Activated CD8-positive, alpha-beta T cell treated with anti-CD3 and anti-CD28 coated beads for 36 hours (primary cell): ENCODE measurements at regions of chr5 and their contacts with region 1.

Region 1: DNA sequence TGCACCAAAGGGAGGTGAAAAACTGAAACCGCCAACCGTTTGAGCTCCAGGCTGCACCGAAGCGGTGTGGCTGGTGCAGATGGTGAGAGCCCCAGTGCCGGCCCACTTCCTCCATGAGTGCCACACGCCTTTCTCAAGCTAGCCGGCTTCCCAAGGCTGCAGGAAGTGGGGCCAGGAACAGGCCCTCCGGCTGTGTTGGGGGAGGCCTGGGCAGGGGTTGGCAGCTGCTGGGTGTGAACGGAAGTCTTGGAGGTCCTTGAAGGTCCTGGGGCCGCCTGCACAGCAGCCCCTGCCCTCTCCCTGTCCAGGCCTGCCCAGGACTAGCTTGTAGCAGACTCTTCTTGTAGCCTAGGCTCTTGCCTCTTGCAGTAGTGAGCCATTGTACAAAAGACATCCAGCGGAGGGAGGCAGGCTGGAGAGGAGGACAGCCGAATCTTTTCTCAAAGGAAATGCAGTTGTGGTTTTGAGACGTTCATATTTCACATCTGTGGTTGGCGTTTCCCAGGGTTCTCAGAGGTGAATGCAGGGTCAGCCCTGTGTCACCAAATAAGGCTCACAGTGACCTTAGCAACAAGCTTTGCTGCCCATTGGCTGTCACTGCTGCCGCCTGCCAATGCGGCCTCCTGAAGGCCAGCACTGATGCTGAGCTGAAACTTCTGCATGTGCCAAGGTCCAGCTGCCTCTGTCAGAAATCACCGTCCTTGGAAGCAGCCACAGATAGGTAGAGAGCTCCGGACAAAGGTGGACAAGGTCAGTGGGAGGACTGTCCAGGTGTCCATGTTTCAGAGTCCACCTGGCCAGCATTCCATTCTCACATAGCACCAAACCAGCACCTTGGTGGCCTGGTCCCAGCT is 23.9 kb downstream of the IRF1 start:
- DNase-seq: peak; percentile 89
- ATAC-seq: peak; percentile 69
- H3K4me3 Mint-ChIP-seq: peak overlapping the region; percentile 66
- H3K27ac Mint-ChIP-seq: peak overlapping the region; percentile 88
- H3K4me1 Mint-ChIP-seq: peaks cover 87% of the 10 kb centered on the region
- H3K27me3 Mint-ChIP-seq: no peaks in the 10 kb centered on the region
- CTCF ChIP-seq: no peak

Region 2: DNA sequence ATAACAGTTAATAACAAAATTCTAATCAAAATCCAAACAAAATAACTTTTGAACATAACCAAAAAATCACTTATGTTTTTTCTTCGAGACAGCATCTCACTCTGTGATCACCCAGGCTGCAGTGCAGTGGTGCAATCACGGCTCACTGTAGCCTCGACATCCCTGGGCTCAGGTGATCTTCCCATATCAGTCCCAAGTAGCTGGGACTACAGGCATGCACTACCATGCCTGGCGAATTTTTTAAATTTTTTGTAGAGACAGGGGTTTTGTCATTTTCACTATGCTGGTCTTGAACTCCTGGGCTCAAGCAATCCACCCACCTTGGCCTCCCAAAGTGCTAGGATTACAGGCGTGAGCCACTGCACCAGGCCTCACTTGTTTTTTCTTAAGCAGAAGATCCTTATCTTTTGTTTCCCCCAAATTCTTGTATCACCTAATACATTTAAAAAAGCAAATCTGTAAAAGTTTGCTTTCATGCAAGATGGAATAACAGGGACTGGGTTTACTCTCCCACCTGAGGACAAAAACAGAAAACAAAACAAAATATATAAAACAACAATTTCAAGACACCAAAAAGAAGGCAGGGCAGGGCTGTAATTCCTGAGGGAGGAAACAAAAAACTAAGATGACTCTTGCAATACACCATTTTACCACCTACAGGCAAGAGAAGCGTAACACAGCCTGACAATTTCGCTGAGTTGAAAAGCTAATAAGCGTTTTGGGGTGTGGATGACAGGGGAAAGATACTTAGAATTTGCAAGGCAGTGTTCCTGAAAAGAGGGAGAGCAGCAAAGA is 903.0 kb before region 1 on chr5:
- CTCF ChIA-PET with region 1: no interaction called
- POLR2A ChIA-PET with region 1: no interaction called
- intact Hi-C with region 1: no loop called
- DNase-seq: no peak
- ATAC-seq: no peak
- H3K4me3 Mint-ChIP-seq: no peak overlapping the region
- H3K27ac Mint-ChIP-seq: no peak overlapping the region
- H3K4me1 Mint-ChIP-seq: peaks cover 34% of the 10 kb centered on the region
- H3K27me3 Mint-ChIP-seq: no peaks in the 10 kb centered on the region
- CTCF ChIP-seq: no peak

Region 3: DNA sequence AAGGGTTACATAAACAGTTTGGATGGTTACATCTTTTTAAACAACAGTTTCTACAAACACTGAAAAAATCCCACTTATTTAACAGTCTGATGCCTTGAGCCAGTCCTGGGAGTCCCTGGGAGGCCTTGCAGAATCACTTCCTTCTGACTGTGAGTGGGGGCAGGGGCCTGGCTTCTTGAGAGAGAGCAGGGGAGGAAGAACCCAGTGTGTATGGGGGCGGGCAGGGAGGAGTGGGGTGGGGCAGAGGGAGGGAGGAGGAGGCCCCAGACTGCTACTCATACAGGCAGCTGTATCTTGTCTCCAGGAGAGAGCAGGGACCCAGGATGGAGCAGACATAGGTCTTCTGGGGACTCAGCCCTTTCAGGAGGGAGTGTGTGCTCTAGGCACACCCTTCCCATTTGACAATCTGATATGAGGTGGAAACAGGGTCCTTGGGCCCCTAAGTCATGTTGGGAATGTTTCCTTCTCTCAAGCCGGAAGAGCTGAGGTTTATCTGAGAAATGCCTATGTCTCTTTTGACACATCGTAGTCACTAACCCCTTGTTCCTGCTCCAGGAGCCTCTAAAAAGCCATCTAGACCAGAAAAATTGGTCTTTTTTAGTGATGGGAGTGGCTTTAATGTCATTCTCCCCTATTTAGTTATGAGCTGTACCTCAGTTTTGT is 28.9 kb before region 1 on chr5:
- CTCF ChIA-PET with region 1: interaction called, 11 read pairs
- POLR2A ChIA-PET with region 1: interaction called, 1,131 read pairs
- intact Hi-C with region 1: no loop called
- DNase-seq: peak; percentile 84
- ATAC-seq: peak; percentile 89
- H3K4me3 Mint-ChIP-seq: peak overlapping the region; percentile 53
- H3K27ac Mint-ChIP-seq: peak overlapping the region; percentile 88
- H3K4me1 Mint-ChIP-seq: peaks cover 84% of the 10 kb centered on the region
- H3K27me3 Mint-ChIP-seq: no peaks in the 10 kb centered on the region
- CTCF ChIP-seq: no peak

Region 4: DNA sequence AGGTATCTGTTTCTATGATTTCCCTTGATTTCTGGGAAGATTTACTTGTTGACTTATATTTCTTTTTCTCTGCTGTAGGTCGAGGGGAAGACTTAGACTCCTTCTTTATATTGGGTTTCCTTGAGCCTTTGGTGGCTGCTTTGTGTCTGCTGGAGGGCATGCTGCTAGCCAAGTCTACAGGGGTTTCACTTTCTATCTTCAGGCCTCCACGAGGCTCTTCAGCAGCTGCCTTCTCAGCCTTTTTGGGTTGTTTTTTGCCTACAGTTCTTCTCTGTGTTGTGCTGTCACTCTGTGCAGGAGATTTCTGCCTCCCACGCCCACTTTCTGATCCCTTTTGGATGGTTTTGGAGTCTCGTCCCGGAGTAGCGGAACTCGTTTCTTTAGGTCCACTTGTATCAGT is 430.0 kb after region 1 on chr5:
- CTCF ChIA-PET with region 1: no interaction called
- POLR2A ChIA-PET with region 1: no interaction called
- intact Hi-C with region 1: no loop called
- DNase-seq: no peak
- ATAC-seq: no peak
- H3K4me3 Mint-ChIP-seq: no peak overlapping the region
- H3K27ac Mint-ChIP-seq: peak overlapping the region; percentile 56
- H3K4me1 Mint-ChIP-seq: peaks cover 8% of the 10 kb centered on the region
- H3K27me3 Mint-ChIP-seq: no peaks in the 10 kb centered on the region
- CTCF ChIP-seq: no peak